CD8-positive, alpha-beta T cell (primary cell): ENCODE measurements at regions of chr9 and their contacts with region 1.

Region 1: GRCh38 chr9:134391314-134392231 is 65.3 kb downstream of the RXRA start:
- DNase-seq: peak; percentile 51 to 96 (median 74)
- ATAC-seq: peak; percentile 65
- H3K4me3 ChIP-seq: peak overlapping the region; percentile 41 to 44
- H3K4me3 Mint-ChIP-seq: peak overlapping the region; percentile 77
- H3K27ac ChIP-seq: peak overlapping the region; percentile 92 to 94
- H3K27ac Mint-ChIP-seq: peak overlapping the region; percentile 98
- H3K4me1 ChIP-seq: peaks cover 62% of the 10 kb centered on the region
- H3K4me1 Mint-ChIP-seq: peaks cover 51% of the 10 kb centered on the region
- H3K27me3 ChIP-seq: no peaks in the 10 kb centered on the region
- H3K27me3 Mint-ChIP-seq: no peaks in the 10 kb centered on the region
- CTCF ChIP-seq: no peak

Region 2: GRCh38 chr9:134325817-134326723 is 65.5 kb before region 1 on chr9 and contains the start of gene RXRA:
- CTCF ChIA-PET with region 1: interaction called, 3 read pairs
- POLR2A ChIA-PET with region 1: interaction called, 4 read pairs
- intact Hi-C with region 1: loop called (anchors 5 to 10 kb)
- DNase-seq: peak; percentile 37 to 87 (median 74)
- ATAC-seq: peak; percentile 69
- H3K4me3 ChIP-seq: peak within 1 kb of the TSS; percentile 68 to 93
- H3K4me3 Mint-ChIP-seq: peak within 1 kb of the TSS; percentile 75
- H3K27ac ChIP-seq: peak within 1 kb of the TSS in 1 of 2 experiments; percentile 33
- H3K27ac Mint-ChIP-seq: no peak within 1 kb of the TSS
- H3K4me1 ChIP-seq: peaks cover 16% of the 10 kb centered on the region
- H3K4me1 Mint-ChIP-seq: peaks cover 2% of the 10 kb centered on the region
- H3K27me3 ChIP-seq: no peaks in the 10 kb centered on the region
- H3K27me3 Mint-ChIP-seq: no peaks in the 10 kb centered on the region
- CTCF ChIP-seq: no peak
- total RNA-seq, gene RXRA: 11.6 to 13.7 TPM

Region 3: DNA sequence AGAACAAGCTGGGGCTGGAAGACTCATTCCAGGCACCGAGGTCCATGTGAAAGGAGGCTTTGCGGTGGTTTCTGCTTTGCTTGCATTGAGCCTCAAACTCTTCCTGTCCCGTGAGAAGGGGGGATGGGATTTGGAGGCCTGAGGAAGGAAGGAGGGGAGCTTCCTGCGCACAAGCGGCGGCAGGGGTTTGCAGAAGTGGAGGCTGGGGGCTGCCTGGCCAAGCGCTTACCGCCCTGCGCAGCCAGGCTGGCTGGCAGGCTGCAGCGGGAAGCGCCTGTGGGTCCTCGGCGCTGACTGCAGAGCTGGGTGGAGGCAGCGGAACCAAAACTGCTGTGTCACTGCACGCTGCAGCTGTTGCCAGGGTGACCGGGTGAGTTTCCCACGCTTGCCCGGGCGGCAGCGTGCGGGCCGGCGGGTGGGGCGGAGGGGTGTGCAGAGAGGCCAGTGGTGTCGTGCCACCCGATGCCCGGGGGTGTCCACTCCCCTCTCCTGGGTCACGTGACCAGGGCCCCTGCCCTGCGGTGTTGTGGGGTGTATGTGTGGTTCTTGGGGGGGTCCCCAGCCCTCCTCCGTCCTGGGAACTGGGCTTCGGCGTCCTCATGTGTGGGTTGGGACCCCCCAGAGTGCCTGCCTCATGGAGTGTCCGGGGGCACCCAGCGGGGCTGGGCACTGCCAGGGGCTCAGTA is 15.7 kb after region 1 on chr9:
- CTCF ChIA-PET with region 1: interaction called, 6 read pairs
- POLR2A ChIA-PET with region 1: interaction called, 10 read pairs
- intact Hi-C with region 1: loop called (anchors 2 kb)
- DNase-seq: peak; percentile 52 to 90 (median 74)
- ATAC-seq: peak; percentile 83
- H3K4me3 ChIP-seq: peak overlapping the region; percentile 27 to 45
- H3K4me3 Mint-ChIP-seq: peak overlapping the region; percentile 74
- H3K27ac ChIP-seq: peak overlapping the region in 1 of 2 experiments; percentile 24
- H3K27ac Mint-ChIP-seq: peak overlapping the region; percentile 62
- H3K4me1 ChIP-seq: peaks cover 55% of the 10 kb centered on the region
- H3K4me1 Mint-ChIP-seq: peaks cover 34% of the 10 kb centered on the region
- H3K27me3 ChIP-seq: no peaks in the 10 kb centered on the region
- H3K27me3 Mint-ChIP-seq: no peaks in the 10 kb centered on the region
- CTCF ChIP-seq: no peak

Region 4: DNA sequence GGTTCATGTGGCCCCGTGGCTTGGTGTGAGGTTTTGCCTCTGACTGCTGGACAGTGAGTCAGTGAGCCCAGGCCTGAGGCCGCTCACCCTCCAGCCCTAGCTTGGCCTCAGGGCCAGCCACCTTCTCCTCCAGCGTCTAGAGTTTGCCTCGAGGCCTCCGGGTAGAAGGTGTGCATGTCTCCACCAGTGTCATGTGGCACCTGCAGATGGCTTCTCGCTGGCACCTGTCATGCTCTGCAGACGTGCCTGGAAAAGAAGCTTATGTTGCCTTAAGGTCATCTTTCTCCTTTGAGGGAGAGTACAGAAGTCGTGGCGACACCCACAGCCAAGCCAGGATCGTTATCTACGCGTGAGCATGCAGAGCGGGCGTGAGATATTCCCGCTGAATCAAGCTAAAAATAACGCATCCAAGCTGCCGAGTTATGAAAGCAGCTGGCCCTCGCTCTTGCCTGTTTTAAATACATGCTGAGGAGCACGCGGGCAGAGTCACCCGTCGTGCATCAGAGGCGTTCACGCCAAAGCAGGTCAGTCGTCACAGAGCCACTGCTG is 409.3 kb after region 1 on chr9:
- CTCF ChIA-PET with region 1: no interaction called
- POLR2A ChIA-PET with region 1: no interaction called
- intact Hi-C with region 1: no loop called
- DNase-seq: no peak
- ATAC-seq: no peak
- H3K4me3 ChIP-seq: no peak overlapping the region
- H3K4me3 Mint-ChIP-seq: no peak overlapping the region
- H3K27ac ChIP-seq: no peak overlapping the region
- H3K27ac Mint-ChIP-seq: no peak overlapping the region
- H3K4me1 ChIP-seq: no peaks in the 10 kb centered on the region
- H3K4me1 Mint-ChIP-seq: no peaks in the 10 kb centered on the region
- H3K27me3 ChIP-seq: no peaks in the 10 kb centered on the region
- H3K27me3 Mint-ChIP-seq: no peaks in the 10 kb centered on the region
- CTCF ChIP-seq: no peak